Naive thymus-derived CD4-positive, alpha-beta T cell (primary cell): ENCODE measurements at regions of chr15 and their contacts with region 1.

Region 1: DNA sequence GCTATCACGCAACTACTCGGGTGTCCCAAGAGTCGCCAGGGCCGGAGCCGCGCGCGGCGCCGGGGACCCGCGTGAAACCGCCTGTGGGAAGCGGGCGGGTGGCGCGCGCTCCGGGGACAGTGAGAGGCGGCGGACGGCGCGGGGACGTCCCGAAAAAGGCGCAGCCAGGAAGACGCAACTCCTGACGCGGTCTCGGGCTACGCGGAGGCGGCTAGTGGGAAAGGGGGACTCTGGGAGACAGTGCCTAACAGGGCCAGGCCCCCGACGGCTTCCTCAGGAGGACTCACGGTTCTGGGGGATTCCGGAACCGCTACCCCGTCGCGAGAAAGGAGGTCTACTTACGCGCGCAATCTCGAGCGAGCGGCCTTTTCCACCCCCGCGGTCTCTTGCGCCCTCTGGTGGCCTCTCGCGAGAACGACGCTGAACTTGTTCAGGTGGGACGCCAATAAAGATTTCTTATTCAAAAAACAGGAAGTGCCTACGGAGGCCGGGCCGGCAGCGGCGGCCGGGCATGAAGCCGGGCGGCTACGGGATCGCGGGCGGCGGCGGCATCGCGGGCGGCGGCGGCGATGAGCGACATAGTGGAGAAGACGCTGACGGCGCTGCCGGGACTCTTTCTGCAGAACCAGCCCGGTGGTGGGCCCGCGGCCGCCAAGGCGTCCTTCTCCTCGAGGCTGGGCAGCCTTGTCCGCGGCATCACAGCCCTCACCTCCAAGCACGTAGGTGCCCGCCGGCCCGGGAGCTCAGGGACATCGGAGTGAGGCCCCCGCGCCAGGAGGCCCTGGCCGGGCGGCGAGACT is at the start of gene AP4E1:
- DNase-seq: peak; percentile 91 to 96 (median 95)
- ATAC-seq: peak; percentile 81
- H3K4me3 ChIP-seq: peak within 1 kb of the TSS; percentile 74
- H3K4me3 Mint-ChIP-seq: peak within 1 kb of the TSS; percentile 89 to 99 (median 96)
- H3K27ac ChIP-seq: peak within 1 kb of the TSS; percentile 99
- H3K27ac Mint-ChIP-seq: peak within 1 kb of the TSS; percentile 93 to 99 (median 98)
- H3K4me1 ChIP-seq: peaks cover 4% of the 10 kb centered on the region in 2 donors
- H3K4me1 Mint-ChIP-seq: peaks cover 11 to 35% (median 30%) of the 10 kb centered on the region in 7 donors
- H3K27me3 ChIP-seq: no peaks in the 10 kb centered on the region
- H3K27me3 Mint-ChIP-seq: no peaks in the 10 kb centered on the region
- total RNA-seq, gene AP4E1: 9.9 to 13.8 (median 12.5) TPM

Region 2: GRCh38 chr15:49046220-49047102 is 1861.9 kb before region 1 on chr15 and contains the start of gene SECISBP2L:
- CTCF ChIA-PET with region 1: no interaction called
- POLR2A ChIA-PET with region 1: no interaction called
- intact Hi-C with region 1: loop called (anchors 5 kb)
- DNase-seq: peak; percentile 73 to 92 (median 91)
- ATAC-seq: peak; percentile 98
- H3K4me3 ChIP-seq: peak within 1 kb of the TSS; percentile 86
- H3K4me3 Mint-ChIP-seq: peak within 1 kb of the TSS; percentile 96 to 99 (median 98)
- H3K27ac ChIP-seq: peak within 1 kb of the TSS; percentile 82
- H3K27ac Mint-ChIP-seq: peak within 1 kb of the TSS; percentile 91 to 97 (median 93)
- H3K4me1 ChIP-seq: peaks cover 16 to 18% of the 10 kb centered on the region in 2 donors
- H3K4me1 Mint-ChIP-seq: peaks cover 23 to 41% (median 34%) of the 10 kb centered on the region in 7 donors
- H3K27me3 ChIP-seq: no peaks in the 10 kb centered on the region
- H3K27me3 Mint-ChIP-seq: no peaks in the 10 kb centered on the region
- total RNA-seq, gene SECISBP2L: 39.3 to 75.8 (median 55.8) TPM

Region 3: DNA sequence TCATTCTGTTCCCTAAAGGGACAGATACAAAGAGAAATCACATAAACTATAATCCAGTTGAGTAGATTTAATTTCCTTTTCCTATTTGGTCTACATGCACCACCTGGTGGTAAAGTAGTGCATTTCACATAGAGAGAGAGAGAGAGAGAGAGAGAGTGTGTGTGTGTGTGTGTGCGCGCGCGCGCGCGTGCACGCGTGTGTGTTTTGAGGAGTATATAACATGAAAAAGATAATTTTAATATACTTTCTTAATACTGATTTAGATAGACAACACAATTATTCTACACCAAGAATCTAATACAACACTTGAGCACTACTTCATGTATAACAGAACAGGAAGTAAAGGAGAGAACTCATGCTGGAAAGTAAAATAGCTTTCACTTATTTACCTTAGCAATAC is 1486.4 kb before region 1 on chr15:
- CTCF ChIA-PET with region 1: no interaction called
- POLR2A ChIA-PET with region 1: no interaction called
- intact Hi-C with region 1: loop called in 1 of 2 experiments (anchors 5 kb)
- DNase-seq: peak in 8 of 9 donors; percentile 5 to 60 (median 52)
- ATAC-seq: peak; percentile 75
- H3K4me3 ChIP-seq: no peak overlapping the region
- H3K4me3 Mint-ChIP-seq: peak overlapping the region in 8 of 10 donors; percentile 23 to 72 (median 49)
- H3K27ac ChIP-seq: no peak overlapping the region
- H3K27ac Mint-ChIP-seq: peak overlapping the region in 7 of 9 donors; percentile 10 to 84 (median 74)
- H3K4me1 ChIP-seq: no peaks in the 10 kb centered on the region
- H3K4me1 Mint-ChIP-seq: peaks cover 3 to 6% (median 4%) of the 10 kb centered on the region in 7 donors
- H3K27me3 ChIP-seq: no peaks in the 10 kb centered on the region
- H3K27me3 Mint-ChIP-seq: peaks cover 0 to 9% (median 0%) of the 10 kb centered on the region in 5 donors

Region 4: GRCh38 chr15:50182219-50183013 is 726.0 kb before region 1 on chr15:
- CTCF ChIA-PET with region 1: no interaction called
- POLR2A ChIA-PET with region 1: no interaction called
- intact Hi-C with region 1: loop called (anchors 2 kb)
- DNase-seq: peak in 6 of 9 donors; percentile 13 to 65 (median 21)
- ATAC-seq: peak; percentile 56
- H3K4me3 ChIP-seq: peak overlapping the region; percentile 67
- H3K4me3 Mint-ChIP-seq: peak overlapping the region; percentile 82 to 98 (median 90)
- H3K27ac ChIP-seq: no peak overlapping the region
- H3K27ac Mint-ChIP-seq: peak overlapping the region in 3 of 9 donors; percentile 39 to 85 (median 54)
- H3K4me1 ChIP-seq: peaks cover 0 to 6% of the 10 kb centered on the region in 2 donors
- H3K4me1 Mint-ChIP-seq: peaks cover 7 to 56% (median 12%) of the 10 kb centered on the region in 7 donors
- H3K27me3 ChIP-seq: no peaks in the 10 kb centered on the region
- H3K27me3 Mint-ChIP-seq: peaks cover 0 to 53% (median 38%) of the 10 kb centered on the region in 5 donors

Region 5: DNA sequence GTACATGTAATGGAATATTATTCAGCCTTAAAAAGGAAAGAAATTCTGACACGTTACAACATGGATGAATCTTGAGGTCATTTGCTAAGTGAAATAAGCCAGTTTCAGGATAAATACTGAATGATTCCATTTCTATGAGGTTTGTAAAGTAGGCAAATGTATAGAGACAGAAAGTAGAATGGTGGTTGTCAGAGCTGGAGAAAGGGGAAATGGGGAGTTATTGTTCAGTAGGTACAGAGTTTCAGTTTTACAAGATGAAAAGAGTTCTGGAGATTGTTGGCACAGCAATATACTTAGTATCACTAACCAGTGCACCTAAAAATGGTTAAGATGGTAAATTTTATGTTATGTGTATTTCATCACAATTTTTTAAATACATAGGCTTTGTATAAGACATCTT is 423.6 kb before region 1 on chr15:
- CTCF ChIA-PET with region 1: no interaction called
- POLR2A ChIA-PET with region 1: no interaction called
- intact Hi-C with region 1: loop called (anchors 5 to 10 kb)
- DNase-seq: no peak
- ATAC-seq: no peak
- H3K4me3 ChIP-seq: no peak overlapping the region
- H3K4me3 Mint-ChIP-seq: no peak overlapping the region
- H3K27ac ChIP-seq: no peak overlapping the region
- H3K27ac Mint-ChIP-seq: peak overlapping the region in 2 of 9 donors; percentile 12 to 20
- H3K4me1 ChIP-seq: no peaks in the 10 kb centered on the region
- H3K4me1 Mint-ChIP-seq: peaks cover 0 to 30% (median 3%) of the 10 kb centered on the region in 7 donors
- H3K27me3 ChIP-seq: no peaks in the 10 kb centered on the region
- H3K27me3 Mint-ChIP-seq: no peaks in the 10 kb centered on the region

Region 6: GRCh38 chr15:50519740-50520425 is 388.5 kb before region 1 on chr15:
- CTCF ChIA-PET with region 1: no interaction called
- POLR2A ChIA-PET with region 1: no interaction called
- intact Hi-C with region 1: no loop called
- DNase-seq: no peak
- ATAC-seq: no peak
- H3K4me3 ChIP-seq: no peak overlapping the region
- H3K4me3 Mint-ChIP-seq: no peak overlapping the region
- H3K27ac ChIP-seq: no peak overlapping the region
- H3K27ac Mint-ChIP-seq: no peak overlapping the region
- H3K4me1 ChIP-seq: no peaks in the 10 kb centered on the region
- H3K4me1 Mint-ChIP-seq: no peaks in the 10 kb centered on the region
- H3K27me3 ChIP-seq: no peaks in the 10 kb centered on the region
- H3K27me3 Mint-ChIP-seq: no peaks in the 10 kb centered on the region

Region 7: DNA sequence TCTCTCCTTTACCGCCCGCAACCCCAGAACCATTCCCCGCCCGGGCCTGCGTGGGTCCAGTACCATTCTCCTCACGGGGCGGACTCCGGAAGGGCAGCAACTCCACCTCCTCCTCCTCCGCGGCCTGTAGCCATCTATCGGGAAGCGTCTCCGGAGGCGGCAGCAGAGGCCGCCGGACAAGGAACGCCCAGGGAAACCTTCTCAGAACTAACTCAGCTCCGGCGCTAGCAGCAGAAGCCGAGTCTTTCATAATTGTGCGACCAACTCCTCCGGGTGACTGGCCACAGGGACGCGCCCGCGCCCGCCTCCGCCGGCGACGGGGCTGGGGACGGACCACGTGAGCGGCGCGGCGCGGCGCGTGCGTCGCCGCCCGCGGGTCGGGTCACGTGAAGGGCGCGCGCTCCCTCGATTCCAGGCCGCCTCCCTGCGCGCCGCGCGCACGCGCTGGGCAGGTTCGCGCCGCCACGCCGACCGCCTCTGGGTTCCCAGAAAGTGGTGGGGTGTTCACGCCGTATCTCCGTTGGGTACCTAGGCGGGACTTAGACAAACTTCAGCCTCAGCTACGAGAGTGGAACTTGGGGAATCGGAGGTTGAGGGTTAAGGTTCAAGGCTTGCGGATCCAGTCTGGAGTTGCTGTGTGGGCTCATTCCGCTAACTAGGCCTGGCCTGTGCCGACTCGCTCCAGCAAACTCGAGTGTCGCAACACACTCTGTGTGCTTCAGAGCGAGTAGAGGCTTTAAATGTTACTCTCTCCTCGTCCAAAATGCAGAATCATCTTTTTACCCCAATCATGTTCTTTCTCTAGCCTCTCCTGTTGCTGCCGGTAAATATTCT is 221.7 kb before region 1 on chr15 and contains the start of gene TRPM7:
- CTCF ChIA-PET with region 1: interaction called, 3 read pairs
- POLR2A ChIA-PET with region 1: interaction called, 9 read pairs
- intact Hi-C with region 1: loop called (anchors 1 kb)
- DNase-seq: peak; percentile 83 to 93 (median 90)
- ATAC-seq: peak; percentile 91
- H3K4me3 ChIP-seq: peak within 1 kb of the TSS; percentile 99
- H3K4me3 Mint-ChIP-seq: peak within 1 kb of the TSS; percentile 86 to 100 (median 97)
- H3K27ac ChIP-seq: peak within 1 kb of the TSS; percentile 93
- H3K27ac Mint-ChIP-seq: peak within 1 kb of the TSS; percentile 91 to 99 (median 97)
- H3K4me1 ChIP-seq: peaks cover 16 to 26% of the 10 kb centered on the region in 2 donors
- H3K4me1 Mint-ChIP-seq: peaks cover 42 to 62% (median 51%) of the 10 kb centered on the region in 7 donors
- H3K27me3 ChIP-seq: no peaks in the 10 kb centered on the region
- H3K27me3 Mint-ChIP-seq: no peaks in the 10 kb centered on the region
- total RNA-seq, gene TRPM7: 36.1 to 62.3 (median 45.2) TPM

Region 8: GRCh38 chr15:50886140-50886467 is 22.3 kb before region 1 on chr15:
- CTCF ChIA-PET with region 1: interaction called, 5 read pairs
- POLR2A ChIA-PET with region 1: interaction called, 5 read pairs
- intact Hi-C with region 1: loop called (anchors 1 kb)
- DNase-seq: no peak
- ATAC-seq: no peak
- H3K4me3 ChIP-seq: no peak overlapping the region
- H3K4me3 Mint-ChIP-seq: no peak overlapping the region
- H3K27ac ChIP-seq: no peak overlapping the region
- H3K27ac Mint-ChIP-seq: peak overlapping the region in 1 of 9 donors; percentile 80
- H3K4me1 ChIP-seq: no peaks in the 10 kb centered on the region
- H3K4me1 Mint-ChIP-seq: peaks cover 2 to 52% (median 6%) of the 10 kb centered on the region in 7 donors
- H3K27me3 ChIP-seq: no peaks in the 10 kb centered on the region
- H3K27me3 Mint-ChIP-seq: no peaks in the 10 kb centered on the region